Endothelial cell of umbilical vein (primary cell): ENCODE measurements at regions of chr4 and their contacts with region 1.

Region 1: GRCh38 chr4:133154725-133155124 is 5.6 kb downstream of the PCDH10 start:
- DNase-seq: peak; percentile 65
- H3K4me3 ChIP-seq: peak overlapping the region in 1 of 3 experiments; percentile 11
- H3K27ac ChIP-seq: no peak overlapping the region
- H3K4me1 ChIP-seq: peaks cover 22% of the 10 kb centered on the region
- H3K27me3 ChIP-seq: no peaks in the 10 kb centered on the region
- CTCF ChIP-seq: peak; percentile 53 to 58
- POLR2A ChIP-seq: no peak

Region 2: GRCh38 chr4:133178956-133179355 is 24.2 kb after region 1 on chr4:
- CTCF ChIA-PET with region 1: interaction called, 11 read pairs
- POLR2A ChIA-PET with region 1: no interaction called
- dilution Hi-C with region 1: no loop called
- intact Hi-C with region 1: no loop called
- DNase-seq: no peak
- H3K4me3 ChIP-seq: no peak overlapping the region
- H3K27ac ChIP-seq: no peak overlapping the region
- H3K4me1 ChIP-seq: no peaks in the 10 kb centered on the region
- H3K27me3 ChIP-seq: no peaks in the 10 kb centered on the region
- CTCF ChIP-seq: no peak
- POLR2A ChIP-seq: no peak

Region 3: GRCh38 chr4:133483600-133484246 is 329.0 kb after region 1 on chr4:
- CTCF ChIA-PET with region 1: interaction called, 43 read pairs
- POLR2A ChIA-PET with region 1: no interaction called
- dilution Hi-C with region 1: no loop called
- intact Hi-C with region 1: loop called (anchors 1 kb)
- DNase-seq: peak; percentile 55
- H3K4me3 ChIP-seq: no peak overlapping the region
- H3K27ac ChIP-seq: no peak overlapping the region
- H3K4me1 ChIP-seq: no peaks in the 10 kb centered on the region
- H3K27me3 ChIP-seq: no peaks in the 10 kb centered on the region
- CTCF ChIP-seq: peak; percentile 20 to 42
- POLR2A ChIP-seq: no peak

Region 4: GRCh38 chr4:134628066-134628465 is 1473.3 kb after region 1 on chr4:
- CTCF ChIA-PET with region 1: no interaction called
- POLR2A ChIA-PET with region 1: no interaction called
- dilution Hi-C with region 1: no loop called
- intact Hi-C with region 1: loop called (anchors 10 kb)
- DNase-seq: no peak
- H3K4me3 ChIP-seq: no peak overlapping the region
- H3K27ac ChIP-seq: no peak overlapping the region
- H3K4me1 ChIP-seq: peaks cover 13% of the 10 kb centered on the region
- H3K27me3 ChIP-seq: no peaks in the 10 kb centered on the region
- CTCF ChIP-seq: no peak
- POLR2A ChIP-seq: no peak

Region 5: GRCh38 chr4:134906404-134907023 is 1751.8 kb after region 1 on chr4:
- CTCF ChIA-PET with region 1: interaction called, 16 read pairs
- POLR2A ChIA-PET with region 1: no interaction called
- dilution Hi-C with region 1: no loop called
- intact Hi-C with region 1: no loop called
- DNase-seq: peak; percentile 40
- H3K4me3 ChIP-seq: no peak overlapping the region
- H3K27ac ChIP-seq: no peak overlapping the region
- H3K4me1 ChIP-seq: no peaks in the 10 kb centered on the region
- H3K27me3 ChIP-seq: no peaks in the 10 kb centered on the region
- CTCF ChIP-seq: peak in 1 of 2 donors; percentile 22
- POLR2A ChIP-seq: no peak